CD4-positive, alpha-beta memory T cell (primary cell): ENCODE measurements at regions of chrX and their contacts with region 1.

Region 1: DNA sequence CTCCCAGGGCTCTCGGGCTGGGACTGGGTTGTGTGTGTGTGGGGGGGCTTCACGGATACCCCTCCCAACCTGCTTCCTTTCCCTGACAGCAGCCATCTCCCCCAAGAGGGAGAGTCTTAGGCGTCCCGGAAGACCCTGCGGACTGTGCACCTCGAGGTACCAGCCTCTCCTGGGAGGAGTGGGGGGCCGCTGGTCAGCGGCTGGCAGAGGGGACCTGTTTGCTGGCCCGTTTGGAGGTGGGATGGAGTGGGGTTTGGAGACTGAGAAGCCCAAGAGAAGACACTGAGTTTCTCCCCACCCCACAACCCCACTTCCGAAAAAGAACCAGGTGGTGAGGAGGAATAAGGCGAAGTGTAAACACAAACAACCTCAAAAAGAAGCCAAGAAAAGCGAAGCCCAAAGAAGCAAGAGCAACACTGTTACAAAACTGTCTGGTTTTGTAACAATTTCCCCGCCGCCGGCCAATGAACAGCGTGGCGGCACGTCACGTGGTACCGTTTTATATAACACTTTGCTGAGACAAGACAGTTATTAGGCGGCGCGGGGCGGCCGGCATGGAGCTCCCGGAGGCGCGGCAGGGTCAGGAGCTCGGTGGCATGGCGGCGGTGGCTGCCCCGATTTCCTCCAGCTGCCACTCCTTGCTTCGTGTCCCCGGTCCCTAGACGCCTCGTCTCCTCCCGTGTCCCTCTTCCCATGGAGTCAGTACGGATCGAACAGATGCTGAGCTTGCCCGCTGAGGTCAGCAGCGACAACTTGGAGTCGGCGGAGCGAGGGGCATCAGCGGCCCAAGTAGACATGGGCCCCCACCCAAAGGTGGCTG is at the start of gene LONRF3:
- DNase-seq: peak; percentile 60 to 82 (median 69)
- H3K4me3 ChIP-seq: peak within 1 kb of the TSS; percentile 6 to 57
- H3K4me3 Mint-ChIP-seq: peak within 1 kb of the TSS; percentile 89 to 98 (median 92)
- H3K27ac ChIP-seq: peak within 1 kb of the TSS; percentile 45
- H3K27ac Mint-ChIP-seq: peak within 1 kb of the TSS; percentile 85 to 95 (median 94)
- H3K4me1 ChIP-seq: peaks cover 23% of the 10 kb centered on the region
- H3K4me1 Mint-ChIP-seq: peaks cover 3 to 44% (median 15%) of the 10 kb centered on the region in 4 donors
- H3K27me3 ChIP-seq: no peaks in the 10 kb centered on the region
- H3K27me3 Mint-ChIP-seq: peaks cover 3 to 6% of the 10 kb centered on the region in 2 donors
- total RNA-seq, gene LONRF3: 8.7 to 10.6 TPM

Region 2: GRCh38 chrX:118345401-118346257 is 628.7 kb before region 1 on chrX and contains the start of gene WDR44:
- CTCF ChIA-PET with region 1: no interaction called
- POLR2A ChIA-PET with region 1: no interaction called
- intact Hi-C with region 1: loop called (anchors 5 kb)
- DNase-seq: peak; percentile 88 to 95 (median 94)
- H3K4me3 ChIP-seq: peak within 1 kb of the TSS; percentile 76 to 85
- H3K4me3 Mint-ChIP-seq: peak within 1 kb of the TSS; percentile 97 to 100 (median 99)
- H3K27ac ChIP-seq: peak within 1 kb of the TSS; percentile 84
- H3K27ac Mint-ChIP-seq: peak within 1 kb of the TSS; percentile 97 to 100 (median 98)
- H3K4me1 ChIP-seq: peaks cover 38% of the 10 kb centered on the region
- H3K4me1 Mint-ChIP-seq: peaks cover 16 to 51% (median 27%) of the 10 kb centered on the region in 4 donors
- H3K27me3 ChIP-seq: no peaks in the 10 kb centered on the region
- H3K27me3 Mint-ChIP-seq: no peaks in the 10 kb centered on the region
- total RNA-seq, gene WDR44: 20.5 to 24.1 TPM

Region 3: DNA sequence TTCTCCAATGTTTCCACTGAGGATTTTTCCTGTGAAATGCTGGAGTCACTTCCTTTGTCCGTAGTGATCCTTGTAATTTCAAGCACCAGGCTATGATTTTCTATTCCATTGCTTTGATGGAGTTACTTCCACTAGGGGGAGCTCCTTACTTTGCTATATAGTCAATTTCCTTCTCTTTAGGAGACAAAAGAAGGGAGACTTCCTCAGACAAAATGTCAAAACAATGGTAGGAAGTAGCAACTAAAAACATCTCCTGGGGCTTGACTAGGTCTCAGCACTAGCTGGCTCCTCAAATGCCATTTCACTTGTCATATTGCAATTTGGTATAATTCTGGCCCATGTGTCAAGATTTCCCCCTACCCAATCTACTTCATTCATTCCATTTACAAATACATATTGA is 126.6 kb before region 1 on chrX:
- CTCF ChIA-PET with region 1: interaction called, 3 read pairs
- POLR2A ChIA-PET with region 1: no interaction called
- intact Hi-C with region 1: loop called (anchors 1 kb)
- DNase-seq: peak in 4 of 5 donors; percentile 45 to 51 (median 48)
- H3K4me3 ChIP-seq: no peak overlapping the region
- H3K4me3 Mint-ChIP-seq: no peak overlapping the region
- H3K27ac ChIP-seq: no peak overlapping the region
- H3K27ac Mint-ChIP-seq: no peak overlapping the region
- H3K4me1 ChIP-seq: no peaks in the 10 kb centered on the region
- H3K4me1 Mint-ChIP-seq: no peaks in the 10 kb centered on the region
- H3K27me3 ChIP-seq: no peaks in the 10 kb centered on the region
- H3K27me3 Mint-ChIP-seq: peaks cover 2% of the 10 kb centered on the region in 2 donors

Region 4: GRCh38 chrX:118928151-118928550 is 46.1 kb before region 1 on chrX:
- CTCF ChIA-PET with region 1: no interaction called
- POLR2A ChIA-PET with region 1: no interaction called
- intact Hi-C with region 1: no loop called
- DNase-seq: no peak
- H3K4me3 ChIP-seq: no peak overlapping the region
- H3K4me3 Mint-ChIP-seq: no peak overlapping the region
- H3K27ac ChIP-seq: no peak overlapping the region
- H3K27ac Mint-ChIP-seq: no peak overlapping the region
- H3K4me1 ChIP-seq: no peaks in the 10 kb centered on the region
- H3K4me1 Mint-ChIP-seq: peaks cover 0 to 2% (median 0%) of the 10 kb centered on the region in 4 donors
- H3K27me3 ChIP-seq: no peaks in the 10 kb centered on the region
- H3K27me3 Mint-ChIP-seq: no peaks in the 10 kb centered on the region

Region 5: GRCh38 chrX:118990512-118991227 is 16.4 kb after region 1 on chrX:
- CTCF ChIA-PET with region 1: interaction called, 5 read pairs
- POLR2A ChIA-PET with region 1: interaction called, 8 read pairs
- intact Hi-C with region 1: loop called (anchors 2 kb)
- DNase-seq: no peak
- H3K4me3 ChIP-seq: no peak overlapping the region
- H3K4me3 Mint-ChIP-seq: no peak overlapping the region
- H3K27ac ChIP-seq: no peak overlapping the region
- H3K27ac Mint-ChIP-seq: peak overlapping the region in 4 of 7 donors; percentile 21 to 86 (median 76)
- H3K4me1 ChIP-seq: peaks cover 15% of the 10 kb centered on the region
- H3K4me1 Mint-ChIP-seq: peaks cover 17 to 38% (median 28%) of the 10 kb centered on the region in 4 donors
- H3K27me3 ChIP-seq: no peaks in the 10 kb centered on the region
- H3K27me3 Mint-ChIP-seq: no peaks in the 10 kb centered on the region

Region 6: GRCh38 chrX:119004920-119005524 is 30.7 kb after region 1 on chrX:
- CTCF ChIA-PET with region 1: interaction called, 10 read pairs
- POLR2A ChIA-PET with region 1: interaction called, 5 read pairs
- intact Hi-C with region 1: loop called (anchors 1 kb)
- DNase-seq: peak; percentile 27 to 41 (median 39)
- H3K4me3 ChIP-seq: no peak overlapping the region
- H3K4me3 Mint-ChIP-seq: no peak overlapping the region
- H3K27ac ChIP-seq: no peak overlapping the region
- H3K27ac Mint-ChIP-seq: peak overlapping the region in 1 of 7 donors; percentile 57
- H3K4me1 ChIP-seq: no peaks in the 10 kb centered on the region
- H3K4me1 Mint-ChIP-seq: peaks cover 4 to 34% (median 21%) of the 10 kb centered on the region in 4 donors
- H3K27me3 ChIP-seq: no peaks in the 10 kb centered on the region
- H3K27me3 Mint-ChIP-seq: no peaks in the 10 kb centered on the region

Region 7: DNA sequence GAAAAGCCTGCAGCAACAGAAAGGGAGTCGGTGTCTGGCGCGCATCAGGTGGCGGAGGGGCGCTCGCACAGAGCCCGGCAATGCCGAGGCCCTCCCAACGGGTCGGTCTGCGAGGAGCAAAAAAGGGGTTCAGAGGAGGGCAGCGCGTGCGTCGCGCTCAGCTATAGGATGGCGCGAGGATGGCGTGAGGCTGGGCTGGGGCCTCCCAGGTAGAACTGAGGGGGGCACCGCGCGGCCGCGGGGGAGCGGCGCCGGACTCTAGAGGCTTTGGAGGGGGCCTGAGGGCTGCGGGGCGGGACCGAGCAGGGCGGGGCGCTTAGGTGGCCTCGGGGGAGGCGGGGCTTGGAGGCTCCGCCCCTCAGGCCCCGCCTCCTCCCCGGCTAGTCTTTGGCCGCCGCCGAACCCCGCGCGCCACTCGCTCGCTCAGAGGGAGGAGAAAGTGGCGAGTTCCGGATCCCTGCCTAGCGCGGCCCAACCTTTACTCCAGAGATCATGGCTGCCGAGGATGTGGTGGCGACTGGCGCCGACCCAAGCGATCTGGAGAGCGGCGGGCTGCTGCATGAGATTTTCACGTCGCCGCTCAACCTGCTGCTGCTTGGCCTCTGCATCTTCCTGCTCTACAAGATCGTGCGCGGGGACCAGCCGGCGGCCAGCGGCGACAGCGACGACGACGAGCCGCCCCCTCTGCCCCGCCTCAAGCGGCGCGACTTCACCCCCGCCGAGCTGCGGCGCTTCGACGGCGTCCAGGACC is 261.7 kb after region 1 on chrX and contains the start of gene PGRMC1:
- CTCF ChIA-PET with region 1: no interaction called
- POLR2A ChIA-PET with region 1: no interaction called
- intact Hi-C with region 1: loop called (anchors 5 kb)
- DNase-seq: peak; percentile 80 to 85 (median 84)
- H3K4me3 ChIP-seq: peak within 1 kb of the TSS; percentile 61 to 68
- H3K4me3 Mint-ChIP-seq: peak within 1 kb of the TSS; percentile 86 to 92 (median 90)
- H3K27ac ChIP-seq: peak within 1 kb of the TSS; percentile 52
- H3K27ac Mint-ChIP-seq: peak within 1 kb of the TSS; percentile 71 to 91 (median 83)
- H3K4me1 ChIP-seq: peaks cover 22% of the 10 kb centered on the region
- H3K4me1 Mint-ChIP-seq: peaks cover 9 to 38% (median 17%) of the 10 kb centered on the region in 4 donors
- H3K27me3 ChIP-seq: no peaks in the 10 kb centered on the region
- H3K27me3 Mint-ChIP-seq: no peaks in the 10 kb centered on the region
- total RNA-seq, gene PGRMC1: 15.9 to 17.2 TPM

Region 8: DNA sequence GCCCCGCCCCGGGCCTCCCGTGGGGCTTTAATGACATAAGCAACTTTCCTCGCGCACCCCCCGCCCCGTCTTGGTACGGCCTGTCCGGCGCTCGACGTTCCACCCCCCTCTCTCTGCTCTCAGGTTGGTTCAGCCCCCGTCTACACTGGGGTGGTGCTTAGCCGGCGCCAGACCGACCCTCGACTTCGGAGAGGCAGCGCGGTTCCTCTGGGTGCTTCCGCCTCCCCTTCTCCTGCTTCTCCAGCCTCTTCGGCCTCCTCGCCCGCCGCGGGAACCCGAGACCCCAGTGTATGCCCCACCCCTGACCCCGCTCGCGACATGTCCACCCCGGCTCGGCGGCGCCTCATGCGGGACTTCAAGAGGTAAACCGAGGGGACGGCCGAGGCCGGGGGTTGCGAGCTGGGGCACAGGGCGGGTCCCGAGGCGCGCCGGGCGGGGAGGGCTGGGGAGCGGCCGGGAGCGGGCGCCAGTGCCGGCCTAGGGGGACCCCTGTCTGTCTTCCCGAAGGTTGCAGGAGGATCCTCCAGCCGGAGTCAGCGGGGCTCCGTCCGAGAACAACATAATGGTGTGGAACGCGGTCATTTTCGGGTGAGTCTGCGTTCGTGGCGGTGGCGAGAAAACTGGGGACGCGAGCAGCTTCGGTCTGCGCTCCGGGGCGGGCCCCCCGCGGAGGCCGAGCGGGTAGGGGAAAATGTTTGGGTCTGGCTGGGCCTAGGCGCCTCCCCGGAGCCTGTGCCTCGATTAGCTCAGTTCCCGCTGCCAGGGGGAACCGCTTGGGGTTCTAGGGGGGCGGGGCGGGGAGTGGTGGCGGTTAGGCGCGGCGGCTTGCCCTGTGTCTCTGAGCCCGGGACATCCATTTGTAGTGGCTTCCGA is 600.3 kb after region 1 on chrX and contains the start of gene UBE2A:
- CTCF ChIA-PET with region 1: no interaction called
- POLR2A ChIA-PET with region 1: no interaction called
- intact Hi-C with region 1: loop called (anchors 10 kb)
- DNase-seq: peak; percentile 86 to 89 (median 89)
- H3K4me3 ChIP-seq: peak within 1 kb of the TSS in 1 of 2 donors; percentile 63
- H3K4me3 Mint-ChIP-seq: peak within 1 kb of the TSS; percentile 85 to 94 (median 92)
- H3K27ac ChIP-seq: peak within 1 kb of the TSS; percentile 78
- H3K27ac Mint-ChIP-seq: peak within 1 kb of the TSS; percentile 88 to 98 (median 96)
- H3K4me1 ChIP-seq: peaks cover 22% of the 10 kb centered on the region
- H3K4me1 Mint-ChIP-seq: peaks cover 2 to 33% (median 16%) of the 10 kb centered on the region in 4 donors
- H3K27me3 ChIP-seq: no peaks in the 10 kb centered on the region
- H3K27me3 Mint-ChIP-seq: no peaks in the 10 kb centered on the region
- total RNA-seq, gene UBE2A: 46.7 to 52.5 TPM